Caco-2 (cell line): ENCODE measurements at regions of chr7 and their contacts with region 1.

Region 1: DNA sequence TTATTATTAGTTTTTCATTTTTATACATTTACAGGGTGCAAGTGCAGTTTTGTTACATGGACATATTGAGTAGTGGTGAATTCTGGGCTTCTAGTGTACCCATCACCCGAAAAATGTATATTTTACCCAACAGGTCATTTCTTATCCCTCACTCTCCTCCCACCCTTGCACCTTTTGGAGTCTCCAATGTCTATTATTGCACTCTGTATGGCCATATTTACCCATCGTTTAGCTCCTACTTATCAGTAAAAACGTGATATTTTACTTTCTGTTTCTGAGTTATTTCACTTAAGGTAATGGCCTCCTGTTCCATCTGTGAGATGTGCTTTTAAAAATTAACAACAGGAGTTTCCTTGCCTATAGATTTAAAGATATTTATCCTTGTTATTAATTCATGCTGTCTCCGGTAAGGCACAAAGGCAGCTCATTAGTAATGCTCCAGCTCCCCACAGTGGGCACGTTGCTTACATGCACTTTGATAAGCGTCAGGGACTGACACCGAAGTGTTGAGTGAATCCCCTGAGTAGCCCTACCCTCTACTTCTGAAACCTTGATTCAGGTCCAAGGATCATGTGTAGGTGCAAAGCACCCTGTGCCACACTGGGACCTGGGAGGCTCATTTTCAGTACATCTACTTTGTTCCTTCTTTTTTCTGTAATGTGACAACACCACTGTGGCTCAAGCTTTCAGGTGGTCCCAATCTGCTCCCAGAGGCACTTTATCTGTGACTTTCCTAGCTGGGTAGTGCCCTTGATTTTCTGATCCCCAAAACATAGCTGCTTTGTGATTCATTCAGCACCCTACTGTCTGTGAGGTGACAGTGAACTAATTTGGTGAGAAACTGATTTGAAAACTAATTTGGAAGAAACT is 27.3 kb downstream of the HYAL4 start:
- DNase-seq: peak; percentile 68 to 70
- H3K4me3 ChIP-seq: no peak overlapping the region
- H3K4me3 Mint-ChIP-seq: no peak overlapping the region
- H3K27ac Mint-ChIP-seq: no peak overlapping the region
- H3K4me1 ChIP-seq: no peaks in the 10 kb centered on the region
- H3K4me1 Mint-ChIP-seq: no peaks in the 10 kb centered on the region
- H3K27me3 ChIP-seq: no peaks in the 10 kb centered on the region
- H3K27me3 Mint-ChIP-seq: peaks cover 2% of the 10 kb centered on the region
- CTCF ChIP-seq: peak; percentile 77 to 80

Region 2: DNA sequence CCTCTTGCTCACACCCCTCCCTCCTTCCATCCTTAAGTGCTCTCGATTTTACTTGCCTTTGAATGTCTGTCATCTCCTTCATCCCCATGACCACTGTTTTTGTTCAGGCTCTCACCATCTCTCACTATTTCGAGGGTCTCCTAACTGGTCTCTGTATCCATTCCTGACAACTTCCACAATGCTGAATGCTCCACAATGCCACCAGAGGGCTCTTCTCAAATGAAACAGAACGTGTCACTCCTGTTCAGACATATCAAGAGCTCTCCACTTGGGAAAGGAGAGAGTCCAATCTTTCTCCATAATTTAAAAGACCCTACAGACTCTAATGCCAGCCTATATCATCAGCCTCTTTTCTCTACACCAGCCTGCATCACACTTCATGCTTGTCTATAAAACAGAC is 663.4 kb before region 1 on chr7:
- CTCF ChIA-PET with region 1: no interaction called
- POLR2A ChIA-PET with region 1: no interaction called
- intact Hi-C with region 1: loop called (anchors 2 kb)
- DNase-seq: peak in 1 of 2 experiments; percentile 4
- H3K4me3 ChIP-seq: no peak overlapping the region
- H3K4me3 Mint-ChIP-seq: no peak overlapping the region
- H3K27ac Mint-ChIP-seq: no peak overlapping the region
- H3K4me1 ChIP-seq: no peaks in the 10 kb centered on the region
- H3K4me1 Mint-ChIP-seq: peaks cover 10% of the 10 kb centered on the region
- H3K27me3 ChIP-seq: no peaks in the 10 kb centered on the region
- H3K27me3 Mint-ChIP-seq: peaks cover 6% of the 10 kb centered on the region
- CTCF ChIP-seq: peak; percentile 25 to 45

Region 3: GRCh38 chr7:123494193-123494796 is 377.9 kb before region 1 on chr7:
- CTCF ChIA-PET with region 1: interaction called, 9 read pairs
- POLR2A ChIA-PET with region 1: no interaction called
- intact Hi-C with region 1: loop called (anchors 1 kb)
- DNase-seq: peak in 1 of 2 experiments; percentile 30
- H3K4me3 ChIP-seq: no peak overlapping the region
- H3K4me3 Mint-ChIP-seq: no peak overlapping the region
- H3K27ac Mint-ChIP-seq: no peak overlapping the region
- H3K4me1 ChIP-seq: no peaks in the 10 kb centered on the region
- H3K4me1 Mint-ChIP-seq: peaks cover 7% of the 10 kb centered on the region
- H3K27me3 ChIP-seq: no peaks in the 10 kb centered on the region
- H3K27me3 Mint-ChIP-seq: peaks cover 3% of the 10 kb centered on the region
- CTCF ChIP-seq: peak; percentile 50 to 56

Region 4: GRCh38 chr7:123580406-123581161 is 291.6 kb before region 1 on chr7:
- CTCF ChIA-PET with region 1: interaction called, 3 read pairs
- POLR2A ChIA-PET with region 1: no interaction called
- intact Hi-C with region 1: loop called (anchors 1 kb)
- DNase-seq: peak; percentile 52 to 64
- H3K4me3 ChIP-seq: no peak overlapping the region
- H3K4me3 Mint-ChIP-seq: peak overlapping the region; percentile 58
- H3K27ac Mint-ChIP-seq: no peak overlapping the region
- H3K4me1 ChIP-seq: no peaks in the 10 kb centered on the region
- H3K4me1 Mint-ChIP-seq: peaks cover 5% of the 10 kb centered on the region
- H3K27me3 ChIP-seq: no peaks in the 10 kb centered on the region
- H3K27me3 Mint-ChIP-seq: peaks cover 4% of the 10 kb centered on the region
- CTCF ChIP-seq: peak; percentile 88 to 92

Region 5: DNA sequence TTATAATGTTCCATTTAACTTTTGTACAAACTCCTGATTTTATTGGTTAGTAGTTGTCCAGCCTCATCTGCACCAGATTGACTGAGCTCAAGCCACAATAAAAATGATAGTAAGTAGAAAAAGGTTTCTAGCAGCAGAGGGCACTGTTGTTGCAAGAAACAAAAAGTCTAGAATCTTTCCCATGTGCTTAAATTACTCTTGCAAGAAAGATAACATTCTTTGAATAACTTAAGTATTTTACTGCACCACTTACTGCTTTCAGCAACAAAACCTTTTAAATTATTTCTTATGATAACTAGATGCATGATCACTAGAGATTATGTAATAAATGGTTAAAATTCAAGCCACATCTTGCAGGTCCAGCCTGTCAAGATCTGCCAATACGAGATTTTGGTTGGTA is 189.5 kb before region 1 on chr7:
- CTCF ChIA-PET with region 1: interaction called, 13 read pairs
- POLR2A ChIA-PET with region 1: no interaction called
- intact Hi-C with region 1: loop called (anchors 1 kb)
- DNase-seq: peak in 1 of 2 experiments; percentile 54
- H3K4me3 ChIP-seq: no peak overlapping the region
- H3K4me3 Mint-ChIP-seq: no peak overlapping the region
- H3K27ac Mint-ChIP-seq: no peak overlapping the region
- H3K4me1 ChIP-seq: peaks cover 19% of the 10 kb centered on the region
- H3K4me1 Mint-ChIP-seq: no peaks in the 10 kb centered on the region
- H3K27me3 ChIP-seq: no peaks in the 10 kb centered on the region
- H3K27me3 Mint-ChIP-seq: no peaks in the 10 kb centered on the region
- CTCF ChIP-seq: peak; percentile 47 to 61

Region 6: DNA sequence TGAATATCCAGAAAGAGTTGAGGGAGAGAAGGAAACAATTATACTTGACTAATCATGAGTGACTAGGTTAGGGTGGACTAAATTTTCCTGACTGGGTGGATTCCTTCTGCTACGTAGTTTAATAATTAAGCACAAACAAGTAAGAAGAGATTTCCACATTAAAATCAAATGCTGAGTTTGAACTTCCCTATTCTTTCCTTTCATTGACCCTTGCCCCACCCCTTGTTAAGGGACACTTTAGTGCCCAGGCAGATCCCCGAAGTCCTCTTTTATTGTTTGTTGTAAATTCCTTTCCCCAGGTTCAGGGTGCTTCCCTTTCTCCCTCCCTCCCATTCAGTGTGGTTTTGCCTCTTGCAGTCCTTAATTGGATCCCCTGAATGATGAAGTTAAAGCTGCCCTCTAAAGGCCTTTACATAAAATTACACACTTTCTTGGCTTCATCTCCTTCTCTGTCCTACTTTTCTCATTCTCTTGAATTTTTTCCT is 44.0 kb after region 1 on chr7:
- CTCF ChIA-PET with region 1: no interaction called
- POLR2A ChIA-PET with region 1: no interaction called
- intact Hi-C with region 1: loop called (anchors 2 kb)
- DNase-seq: peak; percentile 55 to 72
- H3K4me3 ChIP-seq: no peak overlapping the region
- H3K4me3 Mint-ChIP-seq: peak overlapping the region; percentile 20
- H3K27ac Mint-ChIP-seq: peak overlapping the region; percentile 68
- H3K4me1 ChIP-seq: peaks cover 11% of the 10 kb centered on the region
- H3K4me1 Mint-ChIP-seq: peaks cover 14% of the 10 kb centered on the region
- H3K27me3 ChIP-seq: no peaks in the 10 kb centered on the region
- H3K27me3 Mint-ChIP-seq: no peaks in the 10 kb centered on the region
- CTCF ChIP-seq: peak; percentile 50 to 59

Region 7: GRCh38 chr7:123974326-123974908 is 102.2 kb after region 1 on chr7:
- CTCF ChIA-PET with region 1: no interaction called
- POLR2A ChIA-PET with region 1: no interaction called
- intact Hi-C with region 1: no loop called
- DNase-seq: no peak
- H3K4me3 ChIP-seq: no peak overlapping the region
- H3K4me3 Mint-ChIP-seq: no peak overlapping the region
- H3K27ac Mint-ChIP-seq: no peak overlapping the region
- H3K4me1 ChIP-seq: no peaks in the 10 kb centered on the region
- H3K4me1 Mint-ChIP-seq: no peaks in the 10 kb centered on the region
- H3K27me3 ChIP-seq: no peaks in the 10 kb centered on the region
- H3K27me3 Mint-ChIP-seq: no peaks in the 10 kb centered on the region
- CTCF ChIP-seq: no peak

Region 8: GRCh38 chr7:123995617-123996326 is 123.5 kb after region 1 on chr7:
- CTCF ChIA-PET with region 1: no interaction called
- POLR2A ChIA-PET with region 1: no interaction called
- intact Hi-C with region 1: no loop called
- DNase-seq: no peak
- H3K4me3 ChIP-seq: no peak overlapping the region
- H3K4me3 Mint-ChIP-seq: no peak overlapping the region
- H3K27ac Mint-ChIP-seq: no peak overlapping the region
- H3K4me1 ChIP-seq: no peaks in the 10 kb centered on the region
- H3K4me1 Mint-ChIP-seq: peaks cover 8% of the 10 kb centered on the region
- H3K27me3 ChIP-seq: no peaks in the 10 kb centered on the region
- H3K27me3 Mint-ChIP-seq: no peaks in the 10 kb centered on the region
- CTCF ChIP-seq: no peak